Naive thymus-derived CD8-positive, alpha-beta T cell (primary cell): ENCODE measurements at regions of chr11 and their contacts with region 1.

Region 1: DNA sequence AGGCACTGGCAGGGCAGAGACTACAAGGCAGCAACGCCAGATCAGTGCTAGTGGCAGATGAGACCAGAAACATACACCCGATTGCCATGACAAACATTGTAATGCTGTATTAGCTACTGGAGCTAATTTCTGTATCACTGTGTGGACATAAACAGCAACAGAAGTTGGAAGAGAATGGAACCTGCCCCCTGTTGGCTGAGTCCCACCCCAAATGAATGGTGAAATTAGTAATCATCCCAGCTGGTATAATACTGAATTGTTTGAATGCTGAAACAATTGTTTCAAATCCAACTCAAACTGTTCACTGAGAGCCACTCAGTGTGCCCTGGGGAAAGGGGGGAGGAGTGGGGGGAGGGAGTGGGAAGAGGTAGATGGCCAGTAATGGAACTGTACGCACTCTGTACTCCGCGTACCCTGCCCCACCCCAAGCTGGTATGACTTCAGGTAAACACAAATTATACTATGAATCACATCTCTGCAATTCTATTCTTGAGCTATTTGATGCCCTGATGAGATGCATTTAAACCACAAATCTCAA is 11.2 kb upstream of the BIRC3 start:
- DNase-seq: no peak
- ATAC-seq: peak; percentile 29 to 37
- H3K4me3 Mint-ChIP-seq: peak overlapping the region; percentile 16 to 79 (median 60)
- H3K27ac Mint-ChIP-seq: peak overlapping the region; percentile 81 to 98 (median 92)
- H3K4me1 Mint-ChIP-seq: peaks cover 33 to 78% (median 57%) of the 10 kb centered on the region in 4 donors
- H3K27me3 Mint-ChIP-seq: no peaks in the 10 kb centered on the region

Region 2: GRCh38 chr11:102293873-102294601 is 12.1 kb before region 1 on chr11:
- POLR2A ChIA-PET with region 1: interaction called, 32 read pairs
- DNase-seq: peak in 4 of 10 donors; percentile 26 to 66 (median 64)
- ATAC-seq: peak; percentile 97
- H3K4me3 Mint-ChIP-seq: peak overlapping the region; percentile 67 to 95 (median 86)
- H3K27ac Mint-ChIP-seq: peak overlapping the region; percentile 72 to 95 (median 92)
- H3K4me1 Mint-ChIP-seq: peaks cover 10 to 52% (median 16%) of the 10 kb centered on the region in 4 donors
- H3K27me3 Mint-ChIP-seq: peaks cover 0 to 2% (median 0%) of the 10 kb centered on the region in 5 donors